Activated CD4-positive, alpha-beta T cell treated with anti-CD3 and anti-CD28 coated beads for 36 hours (primary cell): ENCODE measurements at regions of chr9 and their contacts with region 1.

Region 1: GRCh38 chr9:104948277-104948676 is 20.3 kb upstream of the ABCA1 start:
- DNase-seq: no peak
- ATAC-seq: peak; percentile 69
- H3K4me3 Mint-ChIP-seq: no peak overlapping the region
- H3K27ac Mint-ChIP-seq: no peak overlapping the region
- H3K4me1 Mint-ChIP-seq: peaks cover 2% of the 10 kb centered on the region
- H3K27me3 Mint-ChIP-seq: no peaks in the 10 kb centered on the region

Region 2: GRCh38 chr9:104936291-104936690 is 12.0 kb before region 1 on chr9:
- CTCF ChIA-PET with region 1: interaction called, 3 read pairs
- POLR2A ChIA-PET with region 1: interaction called, 3 read pairs
- intact Hi-C with region 1: loop called in 1 of 2 experiments (anchors 2 kb)
- DNase-seq: no peak
- ATAC-seq: no peak
- H3K4me3 Mint-ChIP-seq: no peak overlapping the region
- H3K27ac Mint-ChIP-seq: no peak overlapping the region
- H3K4me1 Mint-ChIP-seq: peaks cover 3% of the 10 kb centered on the region
- H3K27me3 Mint-ChIP-seq: no peaks in the 10 kb centered on the region

Region 3: DNA sequence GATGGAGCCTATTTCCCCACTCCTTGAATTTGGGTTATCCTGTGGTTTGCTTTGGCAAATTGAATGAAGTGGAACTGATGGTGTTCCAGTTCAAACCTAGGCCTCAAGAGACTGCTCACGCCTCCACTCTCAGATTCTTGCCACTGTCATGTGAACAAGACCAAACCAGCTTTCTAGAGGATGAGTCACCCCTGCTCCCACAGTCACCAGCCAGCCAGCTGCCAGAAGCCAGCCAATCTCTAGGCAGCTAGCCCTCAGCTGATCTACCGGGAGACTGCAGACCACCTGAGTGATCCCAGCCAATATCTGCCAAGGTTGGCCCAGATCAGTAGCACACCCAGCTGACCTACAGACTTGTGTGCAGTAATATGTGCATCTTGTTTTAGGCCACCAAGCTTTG is 1046.7 kb after region 1 on chr9:
- CTCF ChIA-PET with region 1: no interaction called
- POLR2A ChIA-PET with region 1: no interaction called
- intact Hi-C with region 1: no loop called
- DNase-seq: peak; percentile 16
- ATAC-seq: peak; percentile 63
- H3K4me3 Mint-ChIP-seq: no peak overlapping the region
- H3K27ac Mint-ChIP-seq: no peak overlapping the region
- H3K4me1 Mint-ChIP-seq: no peaks in the 10 kb centered on the region
- H3K27me3 Mint-ChIP-seq: no peaks in the 10 kb centered on the region